ENCODE measurements at regions of chr1 and their contacts with region 1.

Region 1: DNA sequence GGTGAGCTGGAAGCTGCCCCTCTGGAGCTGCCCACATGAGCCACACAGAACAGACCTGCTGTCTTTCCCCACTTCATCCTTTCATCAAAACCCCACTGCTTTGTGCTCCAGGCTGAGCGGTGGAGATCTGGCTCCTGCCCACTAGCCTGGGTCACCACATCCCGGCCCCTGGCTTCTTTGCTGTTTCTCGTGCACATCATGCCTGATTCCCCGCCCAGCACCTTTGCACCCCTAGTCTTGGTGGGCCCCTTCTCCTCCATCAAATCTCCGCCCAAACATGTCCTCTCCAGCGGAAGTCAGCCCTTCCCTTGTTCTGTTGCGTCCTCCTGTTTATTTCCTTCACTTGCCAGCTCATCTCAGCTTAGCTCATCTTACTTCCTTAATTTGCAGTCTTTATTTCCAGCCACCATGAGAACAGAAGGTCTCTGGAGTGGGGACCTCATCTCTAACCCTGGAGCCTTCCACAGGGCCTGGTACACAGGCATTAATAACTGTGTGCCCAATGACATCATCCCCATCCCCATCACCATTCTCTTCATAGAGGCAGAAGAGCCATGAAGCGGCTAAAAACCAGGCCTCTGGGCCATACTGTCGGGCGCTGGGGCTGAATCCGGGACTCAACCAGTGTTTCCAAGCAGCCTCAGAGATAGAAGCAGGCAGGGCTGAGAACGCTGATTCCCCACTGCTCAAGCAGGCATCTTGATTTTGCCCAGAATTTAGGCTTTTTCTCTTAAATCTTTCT is 56.0 kb downstream of the EDN2 start:
- DNase-seq: no peak
- H3K4me3 ChIP-seq: no peak overlapping the region
- H3K27ac ChIP-seq: no peak overlapping the region
- H3K4me1 ChIP-seq: peaks cover 15% of the 10 kb centered on the region
- H3K27me3 ChIP-seq: no peaks in the 10 kb centered on the region
- CTCF ChIP-seq: no peak
- POLR2A ChIP-seq: no peak

Region 2: DNA sequence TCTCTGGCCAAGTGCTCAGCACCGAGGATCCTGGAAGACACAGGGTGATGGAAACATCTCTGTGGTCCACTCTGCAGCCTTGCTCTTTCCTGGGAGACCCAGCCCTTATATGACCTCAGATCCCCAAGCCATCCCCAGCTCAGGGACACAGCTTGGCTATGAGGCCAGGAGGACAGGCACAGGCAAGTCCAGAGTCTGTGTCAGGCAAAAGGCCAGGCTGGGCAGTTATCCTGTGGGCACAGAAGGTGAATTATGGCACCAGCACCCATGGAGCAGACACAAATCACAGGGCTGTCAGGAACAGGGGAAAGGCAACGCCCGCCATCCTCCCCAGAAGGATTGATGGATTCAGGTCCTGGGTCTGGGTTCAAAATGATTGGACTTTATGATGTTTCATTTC is 134.2 kb before region 1 on chr1:
- intact Hi-C with region 1: no loop called
- DNase-seq: peak; percentile 24
- H3K4me3 ChIP-seq: no peak overlapping the region
- H3K27ac ChIP-seq: no peak overlapping the region
- H3K4me1 ChIP-seq: no peaks in the 10 kb centered on the region
- H3K27me3 ChIP-seq: no peaks in the 10 kb centered on the region
- CTCF ChIP-seq: no peak
- POLR2A ChIP-seq: no peak

Region 3: GRCh38 chr1:41484372-41485241 is 56.1 kb after region 1 on chr1 and contains the start of gene EDN2:
- intact Hi-C with region 1: loop called (anchors 5 kb)
- DNase-seq: peak; percentile 91
- H3K4me3 ChIP-seq: peak within 1 kb of the TSS in 1 of 2 donors; percentile 20
- H3K27ac ChIP-seq: peak within 1 kb of the TSS; percentile 69 to 72
- H3K4me1 ChIP-seq: peaks cover 29% of the 10 kb centered on the region
- H3K27me3 ChIP-seq: no peaks in the 10 kb centered on the region
- CTCF ChIP-seq: peak in 3 of 4 experiments; percentile 17 to 70 (median 53)
- POLR2A ChIP-seq: peak; percentile 88
- total RNA-seq, gene EDN2: 2.6 to 12.6 TPM

Measured in prostate gland (tissue), 2 donors.